ENCODE measurements at regions of chr4 and their contacts with region 1.

Region 1: GRCh38 chr4:120049732-120050494 is 16.7 kb downstream of the MAD2L1 start:
- DNase-seq: peak; percentile 57 to 81 (median 76)
- ATAC-seq: peak; percentile 78 to 95 (median 94)
- H3K4me3 ChIP-seq: peak overlapping the region in 8 of 12 donors; percentile 15 to 54 (median 40)
- H3K27ac ChIP-seq: peak overlapping the region in 10 of 12 donors; percentile 24 to 79 (median 55)
- H3K4me1 ChIP-seq: peaks cover 0 to 12% (median under 1%) of the 10 kb centered on the region in 12 donors
- H3K27me3 ChIP-seq: no peaks in the 10 kb centered on the region
- CTCF ChIP-seq: peak; percentile 76 to 88 (median 84)
- POLR2A ChIP-seq: no peak

Region 2: GRCh38 chr4:119314356-119314755 is 735.6 kb before region 1 on chr4:
- intact Hi-C with region 1: loop called in 9 of 10 experiments (anchors 5 to 10 kb)
- DNase-seq: no peak
- ATAC-seq: peak; percentile 75 to 85 (median 80)
- H3K4me3 ChIP-seq: no peak overlapping the region
- H3K27ac ChIP-seq: no peak overlapping the region
- H3K4me1 ChIP-seq: no peaks in the 10 kb centered on the region
- H3K27me3 ChIP-seq: no peaks in the 10 kb centered on the region
- CTCF ChIP-seq: peak; percentile 14 to 66 (median 56)
- POLR2A ChIP-seq: no peak

Region 3: GRCh38 chr4:119559044-119559647 is 490.8 kb before region 1 on chr4:
- intact Hi-C with region 1: loop called (anchors 2 to 5 kb)
- DNase-seq: no peak
- ATAC-seq: no peak
- H3K4me3 ChIP-seq: no peak overlapping the region
- H3K27ac ChIP-seq: peak overlapping the region in 1 of 12 donors; percentile 6
- H3K4me1 ChIP-seq: no peaks in the 10 kb centered on the region
- H3K27me3 ChIP-seq: no peaks in the 10 kb centered on the region
- CTCF ChIP-seq: peak; percentile 16 to 66 (median 51)
- POLR2A ChIP-seq: no peak

Region 4: DNA sequence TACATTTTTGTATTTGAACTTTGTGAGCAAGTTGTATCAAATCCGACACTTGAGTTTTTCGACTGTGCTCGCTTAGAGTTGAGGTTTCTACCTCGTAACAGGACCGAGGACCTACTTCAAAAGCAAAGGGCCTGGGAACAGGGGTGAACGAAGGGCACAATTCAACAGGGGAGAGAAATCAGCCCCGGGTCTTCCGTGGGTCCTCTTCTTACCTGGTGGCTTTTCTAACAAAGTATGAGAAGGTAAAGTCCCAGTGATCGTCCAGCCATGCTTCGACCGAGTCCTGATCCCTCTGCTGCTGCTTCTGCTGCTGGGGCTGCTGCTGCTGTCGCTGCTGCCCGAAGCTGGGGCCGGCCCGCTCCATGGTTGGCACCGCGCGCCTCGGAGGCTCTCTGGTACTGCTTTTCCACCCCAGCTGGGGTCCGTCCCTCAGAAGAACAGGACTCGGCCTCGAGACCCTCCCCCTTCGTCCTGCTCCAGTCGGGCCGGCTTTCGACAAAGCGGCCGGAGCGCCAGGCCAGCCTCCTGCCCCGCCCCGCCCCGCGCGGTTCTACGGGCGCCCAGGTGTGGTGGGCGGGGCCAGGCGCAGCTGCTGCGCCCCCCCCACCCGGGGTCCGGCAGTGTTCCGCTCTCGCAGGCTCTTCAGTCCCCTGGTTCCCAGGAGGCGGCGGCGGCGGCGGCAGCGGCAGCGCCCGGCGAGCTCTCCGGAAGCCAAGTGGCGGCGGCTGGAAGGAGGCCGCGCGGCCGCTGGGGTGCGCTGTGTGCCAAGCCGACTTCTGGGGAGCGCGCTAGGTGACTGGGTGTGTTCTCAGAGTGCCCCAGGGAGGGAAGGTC is 421.4 kb before region 1 on chr4 and contains the start of gene PDE5A:
- intact Hi-C with region 1: loop called (anchors 1 to 5 kb)
- DNase-seq: peak; percentile 76 to 90 (median 81)
- ATAC-seq: peak; percentile 78 to 94 (median 87)
- H3K4me3 ChIP-seq: peak within 1 kb of the TSS; percentile 51 to 87 (median 80)
- H3K27ac ChIP-seq: peak within 1 kb of the TSS; percentile 76 to 95 (median 87)
- H3K4me1 ChIP-seq: peaks cover 0 to 19% (median 3%) of the 10 kb centered on the region in 12 donors
- H3K27me3 ChIP-seq: peaks cover 0 to 35% (median 0%) of the 10 kb centered on the region in 9 donors
- CTCF ChIP-seq: peak; percentile 53 to 88 (median 78)
- POLR2A ChIP-seq: no peak
- total RNA-seq, gene PDE5A: 3.8 to 20.6 (median 10.0) TPM

Region 5: DNA sequence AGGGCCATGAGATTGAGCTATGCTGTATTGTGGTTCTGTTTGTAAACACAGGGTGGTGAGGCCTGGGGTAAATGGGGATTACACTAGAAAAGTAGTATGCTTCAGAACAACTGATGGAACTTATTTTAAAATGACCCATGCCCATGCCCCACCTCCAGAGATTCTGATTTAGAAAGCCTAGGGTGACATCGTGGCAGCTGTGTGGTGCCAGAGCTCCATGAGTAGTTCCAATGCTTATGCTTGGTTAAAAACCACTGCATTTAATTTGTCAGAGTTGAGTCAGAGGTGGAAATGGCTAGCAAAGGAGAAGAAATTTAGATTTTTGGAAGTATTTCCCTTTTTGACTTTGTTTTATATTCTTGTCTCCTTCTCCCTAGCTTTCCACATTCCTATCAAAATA is 357.9 kb before region 1 on chr4:
- intact Hi-C with region 1: loop called (anchors 2 to 5 kb)
- DNase-seq: peak in 3 of 5 donors; percentile 22 to 28 (median 26)
- ATAC-seq: peak; percentile 70 to 81 (median 73)
- H3K4me3 ChIP-seq: peak overlapping the region in 7 of 12 donors; percentile 9 to 46 (median 38)
- H3K27ac ChIP-seq: peak overlapping the region in 5 of 12 donors; percentile 9 to 64 (median 59)
- H3K4me1 ChIP-seq: peaks cover 0 to 7% (median 0%) of the 10 kb centered on the region in 12 donors
- H3K27me3 ChIP-seq: no peaks in the 10 kb centered on the region
- CTCF ChIP-seq: peak in 9 of 12 donors; percentile 18 to 59 (median 43)
- POLR2A ChIP-seq: no peak

Region 6: DNA sequence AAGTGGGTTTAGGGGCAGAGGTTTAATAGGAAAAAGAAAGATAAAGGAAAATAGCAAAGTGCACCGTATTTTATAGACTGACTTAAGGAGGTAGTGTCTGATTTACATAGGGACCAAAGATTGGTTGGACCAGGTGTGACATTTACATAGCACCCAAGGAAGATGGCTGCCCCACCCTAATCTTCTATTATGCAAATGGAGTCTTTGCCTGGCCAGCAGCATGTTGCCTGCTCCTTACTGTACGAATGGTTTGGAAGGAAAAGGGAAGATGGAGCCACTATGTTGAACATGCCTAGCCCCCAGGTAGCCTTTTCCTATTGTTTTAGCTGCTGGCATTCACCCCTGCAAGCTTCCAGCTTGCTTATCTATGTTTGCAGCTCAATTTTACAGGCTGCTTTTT is 275.1 kb before region 1 on chr4:
- intact Hi-C with region 1: loop called in 2 of 10 experiments (anchors 5 to 10 kb)
- DNase-seq: no peak
- ATAC-seq: no peak
- H3K4me3 ChIP-seq: no peak overlapping the region
- H3K27ac ChIP-seq: no peak overlapping the region
- H3K4me1 ChIP-seq: no peaks in the 10 kb centered on the region
- H3K27me3 ChIP-seq: no peaks in the 10 kb centered on the region
- CTCF ChIP-seq: no peak
- POLR2A ChIP-seq: no peak

Region 7: DNA sequence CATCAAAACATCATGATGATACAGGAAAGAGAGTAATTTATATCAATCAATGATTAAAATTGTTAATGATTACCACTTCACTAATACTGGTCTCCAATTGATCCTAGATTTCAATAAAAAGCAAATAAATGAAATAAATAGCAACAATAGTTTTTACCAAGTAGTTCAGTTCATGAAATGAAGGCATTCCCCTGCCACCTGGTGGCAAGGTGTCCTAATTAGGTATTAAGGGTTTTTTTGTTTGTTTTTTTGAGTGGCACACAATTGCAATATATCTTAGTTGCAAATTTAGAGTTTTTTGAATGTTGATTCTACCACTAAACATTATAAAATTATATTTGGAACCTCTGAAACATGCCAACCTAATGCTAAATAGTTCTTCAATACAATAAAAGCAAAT is 263.9 kb before region 1 on chr4:
- intact Hi-C with region 1: loop called in 2 of 10 experiments (anchors 5 kb)
- DNase-seq: no peak
- ATAC-seq: no peak
- H3K4me3 ChIP-seq: no peak overlapping the region
- H3K27ac ChIP-seq: no peak overlapping the region
- H3K4me1 ChIP-seq: no peaks in the 10 kb centered on the region
- H3K27me3 ChIP-seq: no peaks in the 10 kb centered on the region
- CTCF ChIP-seq: peak in 10 of 12 donors; percentile 15 to 51 (median 33)
- POLR2A ChIP-seq: no peak

Region 8: GRCh38 chr4:120228086-120228485 is 178.2 kb after region 1 on chr4:
- intact Hi-C with region 1: no loop called
- DNase-seq: no peak
- ATAC-seq: no peak
- H3K4me3 ChIP-seq: no peak overlapping the region
- H3K27ac ChIP-seq: no peak overlapping the region
- H3K4me1 ChIP-seq: no peaks in the 10 kb centered on the region
- H3K27me3 ChIP-seq: no peaks in the 10 kb centered on the region
- CTCF ChIP-seq: no peak
- POLR2A ChIP-seq: no peak

Region 9: GRCh38 chr4:120293341-120293740 is 243.4 kb after region 1 on chr4:
- intact Hi-C with region 1: no loop called
- DNase-seq: no peak
- ATAC-seq: no peak
- H3K4me3 ChIP-seq: no peak overlapping the region
- H3K27ac ChIP-seq: no peak overlapping the region
- H3K4me1 ChIP-seq: no peaks in the 10 kb centered on the region
- H3K27me3 ChIP-seq: no peaks in the 10 kb centered on the region
- CTCF ChIP-seq: no peak
- POLR2A ChIP-seq: no peak